GM10248 (cell line): ENCODE measurements at regions of chr3 and their contacts with region 1.

Region 1: GRCh38 chr3:152219216-152219615 is 49.5 kb upstream of the MBNL1 start:
- DNase-seq: no peak
- CTCF ChIP-seq: no peak

Region 2: DNA sequence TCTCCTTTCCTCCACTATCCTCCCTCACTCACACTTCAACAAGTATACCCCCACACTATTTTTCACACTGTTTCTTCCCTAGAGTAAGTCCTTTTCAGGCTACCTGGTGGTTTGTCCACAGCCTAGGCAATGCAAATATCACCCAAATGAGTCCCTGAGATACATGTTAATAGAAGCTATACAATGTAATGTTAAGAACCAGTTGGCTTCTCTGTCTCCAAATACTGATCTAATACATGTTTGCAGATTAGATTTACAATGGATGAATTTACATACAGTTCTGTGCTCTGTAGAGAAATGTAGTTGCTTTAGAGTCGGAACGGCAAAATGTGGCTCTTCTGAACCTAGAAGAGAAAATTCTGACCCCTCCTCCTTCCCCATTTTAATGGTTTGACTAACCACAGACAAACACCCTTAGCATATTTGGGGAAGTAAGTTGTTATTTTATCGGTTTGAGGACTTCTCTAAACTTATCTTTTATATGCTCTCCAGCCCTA is 14.1 kb before region 1 on chr3:
- CTCF ChIA-PET with region 1: interaction called, 24 read pairs
- POLR2A ChIA-PET with region 1: no interaction called
- DNase-seq: peak; percentile 31
- CTCF ChIP-seq: no peak

Region 3: GRCh38 chr3:152497457-152497856 is 278.2 kb after region 1 on chr3:
- CTCF ChIA-PET with region 1: no interaction called
- POLR2A ChIA-PET with region 1: no interaction called
- DNase-seq: no peak
- CTCF ChIP-seq: no peak